WTC11 (cell line): ENCODE measurements at regions of chr17 and their contacts with region 1.

Region 1: GRCh38 chr17:42438600-42439567 is 15.8 kb upstream of the CAVIN1 start:
- DNase-seq: peak; percentile 50
- ATAC-seq: peak; percentile 64
- H3K4me3 Mint-ChIP-seq: no peak overlapping the region
- H3K27ac Mint-ChIP-seq: no peak overlapping the region
- H3K4me1 Mint-ChIP-seq: peaks cover 8% of the 10 kb centered on the region
- H3K27me3 Mint-ChIP-seq: no peaks in the 10 kb centered on the region
- CTCF ChIP-seq: no peak

Region 2: DNA sequence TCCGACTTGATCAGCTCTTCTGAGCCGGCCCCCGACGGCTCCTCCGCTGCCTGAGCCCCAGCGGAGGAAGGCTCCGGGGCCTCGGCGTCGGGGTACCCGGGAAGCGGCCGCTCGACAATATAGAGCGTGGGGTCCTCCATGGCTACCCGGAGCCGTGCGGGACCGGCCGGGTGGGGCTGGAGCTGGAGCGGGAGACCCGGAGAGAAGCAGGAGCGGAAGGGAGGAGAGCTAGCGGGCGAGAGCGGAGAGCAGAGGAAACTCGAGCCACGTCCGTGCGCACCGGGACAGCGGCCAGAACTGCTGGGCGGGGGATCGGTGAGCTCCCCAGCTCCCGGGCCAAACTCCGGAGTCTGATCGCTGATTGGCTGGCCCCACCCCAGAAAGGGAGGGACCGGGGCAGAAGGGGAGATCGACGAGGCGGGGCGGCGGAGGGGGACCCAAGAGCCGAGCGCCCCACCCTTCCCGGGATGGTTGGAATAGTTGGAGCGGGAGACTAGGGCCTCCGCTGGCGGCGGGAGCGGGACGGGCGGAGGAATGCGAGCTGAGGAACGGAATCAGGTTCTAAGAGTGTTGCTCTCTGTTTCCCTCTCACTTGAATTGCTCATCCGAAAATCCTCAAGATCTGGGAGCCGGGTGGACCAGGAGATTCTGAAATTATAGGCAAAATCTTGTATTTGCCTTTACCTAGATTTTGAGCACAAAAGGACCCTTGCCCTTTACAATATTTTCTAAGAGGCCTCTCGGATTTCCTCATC is 15.7 kb before region 1 on chr17 and contains the start of gene CAVIN1:
- CTCF ChIA-PET with region 1: interaction called, 12 read pairs
- POLR2A ChIA-PET with region 1: no interaction called
- DNase-seq: peak; percentile 97
- ATAC-seq: peak; percentile 86
- H3K4me3 Mint-ChIP-seq: peak within 1 kb of the TSS; percentile 95
- H3K27ac Mint-ChIP-seq: peak within 1 kb of the TSS; percentile 93
- H3K4me1 Mint-ChIP-seq: peaks cover 31% of the 10 kb centered on the region
- H3K27me3 Mint-ChIP-seq: peaks cover 57% of the 10 kb centered on the region
- CTCF ChIP-seq: no peak
- total RNA-seq, gene CAVIN1: 24.6 to 28.4 TPM (median 27.8 TPM) in 3 replicates

Region 3: DNA sequence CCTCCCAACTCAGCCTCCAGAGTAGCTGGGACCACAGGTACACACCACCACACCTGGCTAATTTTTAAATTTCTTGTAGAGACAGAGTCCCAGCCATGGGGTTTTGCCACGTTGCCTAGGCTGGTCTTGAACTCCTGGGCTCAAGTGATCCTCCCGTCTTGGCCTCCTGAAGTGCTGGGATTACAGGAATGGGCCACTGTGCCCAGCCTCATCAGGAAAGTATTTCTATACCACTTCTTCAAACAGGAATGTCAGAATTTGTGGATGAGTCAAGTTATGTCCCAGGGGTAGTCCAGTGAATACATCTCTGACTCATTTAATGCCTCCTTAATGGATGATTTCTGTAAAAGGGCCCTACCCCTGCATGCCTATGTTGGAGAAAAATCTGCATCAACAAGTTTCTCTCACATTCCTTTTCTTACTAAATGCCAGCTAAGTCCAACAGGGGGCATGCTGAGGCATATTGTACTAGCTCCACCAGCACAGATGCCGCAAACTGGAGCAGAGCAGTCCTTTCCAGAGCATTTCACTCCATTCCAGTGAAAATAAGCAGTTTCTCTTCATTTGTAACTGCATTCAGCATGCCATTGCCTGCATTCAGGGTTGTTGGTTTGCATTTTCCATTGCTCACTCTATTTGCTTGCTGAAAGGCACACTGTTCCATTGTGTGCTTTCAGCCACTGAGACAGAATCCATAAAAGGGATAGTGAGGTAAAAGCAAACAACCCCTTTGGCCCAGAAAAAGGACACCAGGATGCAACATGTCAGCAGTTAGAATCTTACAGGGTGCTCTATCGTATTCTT is 10.5 kb before region 1 on chr17:
- CTCF ChIA-PET with region 1: interaction called, 12 read pairs
- POLR2A ChIA-PET with region 1: no interaction called
- DNase-seq: peak; percentile 59
- ATAC-seq: peak; percentile 83
- H3K4me3 Mint-ChIP-seq: no peak overlapping the region
- H3K27ac Mint-ChIP-seq: peak overlapping the region; percentile 92
- H3K4me1 Mint-ChIP-seq: peaks cover 25% of the 10 kb centered on the region
- H3K27me3 Mint-ChIP-seq: peaks cover 24% of the 10 kb centered on the region
- CTCF ChIP-seq: peak; percentile 50; the same call in 1 of the 2 replicates

Region 4: DNA sequence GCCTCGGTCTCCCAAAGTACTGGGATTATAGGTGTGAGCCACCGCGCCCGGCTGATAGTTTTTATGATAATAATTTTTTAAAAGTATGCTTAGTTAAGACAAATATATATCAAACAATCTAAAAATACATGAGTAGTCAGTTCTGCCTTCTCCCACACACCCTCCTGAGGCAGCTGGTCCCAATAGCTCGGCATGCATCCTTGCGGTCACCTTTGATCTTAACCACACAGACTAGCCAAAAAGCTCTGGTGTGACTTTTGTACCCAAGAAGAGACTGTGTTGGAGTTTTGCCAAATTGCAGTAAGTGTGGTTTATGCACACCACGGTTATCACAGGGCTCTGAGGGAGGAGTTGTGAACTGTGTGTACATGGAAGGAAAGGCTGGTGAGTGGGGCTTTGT is 45.4 kb after region 1 on chr17:
- CTCF ChIA-PET with region 1: no interaction called
- POLR2A ChIA-PET with region 1: no interaction called
- DNase-seq: no peak
- ATAC-seq: no peak
- H3K4me3 Mint-ChIP-seq: no peak overlapping the region
- H3K27ac Mint-ChIP-seq: no peak overlapping the region
- H3K4me1 Mint-ChIP-seq: no peaks in the 10 kb centered on the region
- H3K27me3 Mint-ChIP-seq: no peaks in the 10 kb centered on the region
- CTCF ChIP-seq: no peak